Calu3 (cell line): ENCODE measurements at regions of chr3 and their contacts with region 1.

Region 1: GRCh38 chr3:52238761-52239701 is at the start of gene TWF2:
- DNase-seq: peak; percentile 86
- H3K4me3 Mint-ChIP-seq: peak within 1 kb of the TSS; percentile 87
- H3K27ac Mint-ChIP-seq: peak within 1 kb of the TSS; percentile 89
- H3K4me1 Mint-ChIP-seq: peaks cover 22% of the 10 kb centered on the region
- H3K27me3 Mint-ChIP-seq: no peaks in the 10 kb centered on the region
- CTCF ChIP-seq: no peak
- total RNA-seq, gene TWF2: 48.1 and 49.1 TPM in 2 replicates

Region 2: GRCh38 chr3:52123106-52123725 is 115.8 kb before region 1 on chr3:
- CTCF ChIA-PET with region 1: no interaction called
- intact Hi-C with region 1: no loop called
- DNase-seq: peak; percentile 70
- H3K4me3 Mint-ChIP-seq: no peak overlapping the region
- H3K27ac Mint-ChIP-seq: no peak overlapping the region
- H3K4me1 Mint-ChIP-seq: peaks cover 6% of the 10 kb centered on the region
- H3K27me3 Mint-ChIP-seq: no peaks in the 10 kb centered on the region
- CTCF ChIP-seq: peak; percentile 56

Region 3: GRCh38 chr3:52220380-52221026 is 18.5 kb before region 1 on chr3:
- CTCF ChIA-PET with region 1: interaction called, 15 read pairs
- intact Hi-C with region 1: no loop called
- DNase-seq: peak; percentile 88
- H3K4me3 Mint-ChIP-seq: no peak overlapping the region
- H3K27ac Mint-ChIP-seq: no peak overlapping the region
- H3K4me1 Mint-ChIP-seq: peaks cover 27% of the 10 kb centered on the region
- H3K27me3 Mint-ChIP-seq: no peaks in the 10 kb centered on the region
- CTCF ChIP-seq: peak; percentile 86

Region 4: GRCh38 chr3:52278510-52279069 is 39.6 kb after region 1 on chr3 and contains the start of gene WDR82:
- CTCF ChIA-PET with region 1: interaction called, 9 read pairs
- intact Hi-C with region 1: loop called (anchors 5 kb)
- DNase-seq: peak; percentile 99
- H3K4me3 Mint-ChIP-seq: peak within 1 kb of the TSS; percentile 99
- H3K27ac Mint-ChIP-seq: peak within 1 kb of the TSS; percentile 99
- H3K4me1 Mint-ChIP-seq: peaks cover 50% of the 10 kb centered on the region
- H3K27me3 Mint-ChIP-seq: no peaks in the 10 kb centered on the region
- CTCF ChIP-seq: no peak
- total RNA-seq, gene WDR82: 55.4 and 59.7 TPM in 2 replicates